Adrenal gland (tissue), 19 donors: ENCODE measurements at regions of chr6 and their contacts with region 1.

Region 1: GRCh38 chr6:17820055-17820454 is 113.3 kb upstream of the NUP153 start:
- DNase-seq: no peak
- H3K4me3 ChIP-seq: no peak overlapping the region
- H3K27ac ChIP-seq: no peak overlapping the region
- H3K4me1 ChIP-seq: no peaks in the 10 kb centered on the region
- H3K27me3 ChIP-seq: no peaks in the 10 kb centered on the region
- CTCF ChIP-seq: no peak
- POLR2A ChIP-seq: no peak

Region 2: GRCh38 chr6:17439243-17439993 is 380.6 kb before region 1 on chr6:
- intact Hi-C with region 1: no loop called
- DNase-seq: no peak
- H3K4me3 ChIP-seq: no peak overlapping the region
- H3K27ac ChIP-seq: no peak overlapping the region
- H3K4me1 ChIP-seq: no peaks in the 10 kb centered on the region
- H3K27me3 ChIP-seq: no peaks in the 10 kb centered on the region
- CTCF ChIP-seq: no peak
- POLR2A ChIP-seq: no peak

Region 3: GRCh38 chr6:17867880-17868279 is 47.8 kb after region 1 on chr6:
- intact Hi-C with region 1: no loop called
- DNase-seq: peak in 5 of 7 donors; percentile 18 to 56 (median 39)
- H3K4me3 ChIP-seq: no peak overlapping the region
- H3K27ac ChIP-seq: peak overlapping the region in 4 of 5 donors; percentile 43 to 84 (median 81)
- H3K4me1 ChIP-seq: peaks cover 60 to 72% of the 10 kb centered on the region in 2 donors
- H3K27me3 ChIP-seq: no peaks in the 10 kb centered on the region
- CTCF ChIP-seq: no peak
- POLR2A ChIP-seq: peak in 1 of 2 donors; percentile 19

Region 4: DNA sequence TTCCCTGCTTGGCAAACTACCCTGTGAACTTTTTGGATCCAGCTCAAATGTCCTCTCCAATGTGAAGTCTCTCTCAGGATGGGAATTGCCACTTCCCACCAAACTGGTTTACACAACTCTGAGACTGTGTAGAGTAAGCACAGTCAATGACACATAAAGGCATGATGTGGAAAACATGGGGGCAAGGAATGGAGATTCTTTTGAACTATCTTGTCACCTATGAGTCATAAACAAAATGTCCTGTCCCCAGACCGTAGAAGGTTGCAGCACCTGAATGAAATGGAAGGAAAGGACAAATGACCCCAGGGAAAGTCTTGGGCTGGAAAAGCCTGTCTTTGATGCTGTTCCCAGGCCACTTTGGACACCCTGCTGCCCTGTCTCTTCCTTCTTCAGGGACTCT is 178.4 kb after region 1 on chr6:
- intact Hi-C with region 1: loop called in 1 of 2 experiments (anchors 10 kb)
- DNase-seq: peak in 1 of 7 donors; percentile 0
- H3K4me3 ChIP-seq: no peak overlapping the region
- H3K27ac ChIP-seq: no peak overlapping the region
- H3K4me1 ChIP-seq: no peaks in the 10 kb centered on the region
- H3K27me3 ChIP-seq: no peaks in the 10 kb centered on the region
- CTCF ChIP-seq: no peak
- POLR2A ChIP-seq: no peak